GM12878 (cell line): ENCODE measurements at regions of chr1 and their contacts with region 1.

Region 1: DNA sequence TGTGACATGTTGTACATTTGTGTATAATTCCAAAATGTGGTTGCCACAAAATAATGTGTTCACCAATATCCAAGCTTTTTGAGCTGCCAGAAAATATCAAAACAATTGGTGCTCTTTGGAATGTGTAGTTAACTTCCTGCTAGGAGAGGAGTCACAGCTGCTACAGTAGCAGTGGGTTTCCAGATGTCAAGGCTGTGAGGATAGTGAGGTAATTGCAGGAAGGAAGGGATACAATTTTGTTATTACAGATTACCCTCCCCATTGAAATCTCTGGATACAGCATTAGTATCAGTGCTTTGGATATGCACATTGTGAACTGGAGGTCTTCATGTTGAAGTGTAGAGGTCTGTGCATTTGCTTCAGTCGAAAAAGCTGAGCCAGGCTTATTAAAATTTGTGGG is 253.2 kb downstream of the PTPRC start:
- DNase-seq: no peak
- ATAC-seq: no peak
- H3K4me3 ChIP-seq: no peak overlapping the region
- H3K27ac ChIP-seq: no peak overlapping the region
- H3K4me1 ChIP-seq: no peaks in the 10 kb centered on the region
- H3K27me3 ChIP-seq: no peaks in the 10 kb centered on the region
- CTCF ChIP-seq: no peak
- EP300 ChIP-seq: no peak
- POLR2A ChIP-seq: no peak
- RAD21 ChIP-seq: no peak

Region 2: GRCh38 chr1:198794498-198794897 is 97.6 kb before region 1 on chr1:
- CTCF ChIA-PET with region 1: no interaction called
- POLR2A ChIA-PET with region 1: no interaction called
- RAD21 ChIA-PET with region 1: no interaction called
- SMC1A ChIA-PET with region 1: no interaction called
- in situ Hi-C with region 1: no loop called
- intact Hi-C with region 1: no loop called
- DNase-seq: no peak
- ATAC-seq: no peak
- H3K4me3 ChIP-seq: no peak overlapping the region
- H3K27ac ChIP-seq: no peak overlapping the region
- H3K4me1 ChIP-seq: no peaks in the 10 kb centered on the region
- H3K27me3 ChIP-seq: no peaks in the 10 kb centered on the region
- CTCF ChIP-seq: no peak
- EP300 ChIP-seq: no peak
- POLR2A ChIP-seq: no peak
- RAD21 ChIP-seq: no peak

Region 3: GRCh38 chr1:198922638-198923430 is 30.8 kb after region 1 on chr1:
- CTCF ChIA-PET with region 1: interaction called, 4 read pairs
- POLR2A ChIA-PET with region 1: no interaction called
- RAD21 ChIA-PET with region 1: interaction called, 5 read pairs
- SMC1A ChIA-PET with region 1: interaction called, 12 read pairs
- in situ Hi-C with region 1: no loop called
- intact Hi-C with region 1: no loop called
- DNase-seq: peak; percentile 71
- ATAC-seq: peak; percentile 82
- H3K4me3 ChIP-seq: no peak overlapping the region
- H3K27ac ChIP-seq: peak overlapping the region; percentile 42
- H3K4me1 ChIP-seq: peaks cover 20% of the 10 kb centered on the region
- H3K27me3 ChIP-seq: no peaks in the 10 kb centered on the region
- CTCF ChIP-seq: no peak
- EP300 ChIP-seq: peak; percentile 66 to 77; a peak in 3 of 4 replicates
- POLR2A ChIP-seq: no peak
- RAD21 ChIP-seq: peak; percentile 13; the same call in 1 of the 2 replicates

Region 4: GRCh38 chr1:199020904-199021303 is 128.8 kb after region 1 on chr1:
- CTCF ChIA-PET with region 1: no interaction called
- POLR2A ChIA-PET with region 1: no interaction called
- RAD21 ChIA-PET with region 1: no interaction called
- SMC1A ChIA-PET with region 1: no interaction called
- in situ Hi-C with region 1: no loop called
- intact Hi-C with region 1: no loop called
- DNase-seq: no peak
- ATAC-seq: no peak
- H3K4me3 ChIP-seq: no peak overlapping the region
- H3K27ac ChIP-seq: no peak overlapping the region
- H3K4me1 ChIP-seq: no peaks in the 10 kb centered on the region
- H3K27me3 ChIP-seq: no peaks in the 10 kb centered on the region
- CTCF ChIP-seq: no peak
- EP300 ChIP-seq: no peak
- POLR2A ChIP-seq: no peak
- RAD21 ChIP-seq: no peak